ENCODE measurements at regions of chr2 and their contacts with region 1.

Region 1: GRCh38 chr2:227376911-227377396 is 2.2 kb downstream of the TM4SF20 start:
- DNase-seq: no peak
- ATAC-seq: no peak
- H3K4me3 ChIP-seq: no peak overlapping the region
- H3K4me3 Mint-ChIP-seq: no peak overlapping the region
- H3K27ac ChIP-seq: no peak overlapping the region
- H3K27ac Mint-ChIP-seq: no peak overlapping the region
- H3K4me1 ChIP-seq: no peaks in the 10 kb centered on the region
- H3K4me1 Mint-ChIP-seq: peaks cover 0 to 11% (median 3%) of the 10 kb centered on the region in 7 donors
- H3K27me3 ChIP-seq: no peaks in the 10 kb centered on the region
- H3K27me3 Mint-ChIP-seq: peaks cover 0 to 17% (median 8%) of the 10 kb centered on the region in 5 donors

Region 2: DNA sequence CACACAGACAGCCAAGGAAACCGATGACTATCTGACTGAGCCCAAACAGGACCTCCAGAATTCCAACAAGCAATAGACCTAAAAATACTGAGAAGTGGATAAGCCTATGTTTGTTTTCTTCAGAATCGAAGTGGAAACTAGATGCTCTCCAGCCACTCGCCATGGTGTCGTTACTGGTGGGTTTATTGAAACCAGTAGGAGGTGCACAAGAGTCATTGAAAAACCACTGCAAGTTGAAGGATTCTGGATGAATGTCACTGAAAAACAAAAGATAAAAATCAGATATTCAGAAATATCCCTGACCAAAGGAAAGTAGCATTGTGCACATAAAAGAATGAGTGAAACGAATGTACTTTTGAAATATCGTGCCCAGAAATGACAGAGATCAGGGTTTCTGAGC is 13.2 kb before region 1 on chr2:
- CTCF ChIA-PET with region 1: no interaction called
- POLR2A ChIA-PET with region 1: no interaction called
- intact Hi-C with region 1: no loop called
- DNase-seq: peak in 6 of 9 donors; percentile 3 to 32 (median 15)
- ATAC-seq: no peak
- H3K4me3 ChIP-seq: no peak overlapping the region
- H3K4me3 Mint-ChIP-seq: no peak overlapping the region
- H3K27ac ChIP-seq: no peak overlapping the region
- H3K27ac Mint-ChIP-seq: no peak overlapping the region
- H3K4me1 ChIP-seq: no peaks in the 10 kb centered on the region
- H3K4me1 Mint-ChIP-seq: peaks cover 0 to 8% (median 0%) of the 10 kb centered on the region in 7 donors
- H3K27me3 ChIP-seq: no peaks in the 10 kb centered on the region
- H3K27me3 Mint-ChIP-seq: no peaks in the 10 kb centered on the region

Region 3: GRCh38 chr2:227388537-227389011 is 11.6 kb after region 1 on chr2:
- CTCF ChIA-PET with region 1: no interaction called
- POLR2A ChIA-PET with region 1: no interaction called
- intact Hi-C with region 1: loop called in 1 of 2 experiments (anchors 1 kb)
- DNase-seq: no peak
- ATAC-seq: no peak
- H3K4me3 ChIP-seq: no peak overlapping the region
- H3K4me3 Mint-ChIP-seq: no peak overlapping the region
- H3K27ac ChIP-seq: no peak overlapping the region
- H3K27ac Mint-ChIP-seq: no peak overlapping the region
- H3K4me1 ChIP-seq: no peaks in the 10 kb centered on the region
- H3K4me1 Mint-ChIP-seq: no peaks in the 10 kb centered on the region
- H3K27me3 ChIP-seq: no peaks in the 10 kb centered on the region
- H3K27me3 Mint-ChIP-seq: peaks cover 0 to 3% (median 0%) of the 10 kb centered on the region in 5 donors

Measured in naive thymus-derived CD4-positive, alpha-beta T cell (primary cell).